ENCODE measurements at regions of chr11 and their contacts with region 1.

Region 1: GRCh38 chr11:48116437-48117228 is 100.0 kb upstream of the OR4B1 start:
- DNase-seq: peak; percentile 12
- ATAC-seq: peak; percentile 83
- H3K4me3 ChIP-seq: no peak overlapping the region
- H3K27ac ChIP-seq: no peak overlapping the region
- H3K4me1 ChIP-seq: no peaks in the 10 kb centered on the region
- H3K27me3 ChIP-seq: no peaks in the 10 kb centered on the region
- CTCF ChIP-seq: peak; percentile 36; the same call in 1 of the 2 replicates
- EP300 ChIP-seq: no peak
- POLR2A ChIP-seq: no peak
- RAD21 ChIP-seq: no peak

Region 2: DNA sequence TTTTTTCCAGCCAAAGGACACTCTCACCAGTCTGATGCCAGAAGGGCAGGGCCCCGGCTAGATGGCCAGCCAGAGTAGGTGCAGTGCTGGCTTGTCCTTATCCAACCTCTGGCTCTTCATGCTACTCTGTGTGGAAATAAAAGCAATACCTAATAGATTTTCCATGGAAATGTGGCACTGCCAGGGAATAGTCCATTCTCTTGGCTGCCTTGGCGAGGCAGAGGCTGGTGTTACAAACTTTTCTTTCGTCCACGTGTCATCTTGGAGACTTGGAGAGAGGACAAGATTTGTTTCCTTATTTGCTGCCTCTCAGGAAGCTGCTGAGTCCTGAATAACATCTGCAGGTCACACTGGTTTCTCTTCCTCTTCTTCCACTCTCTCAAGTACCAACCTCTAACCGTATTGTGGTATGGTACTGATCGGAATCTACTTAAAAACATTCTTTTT is 505.3 kb before region 1 on chr11:
- CTCF ChIA-PET with region 1: no interaction called
- POLR2A ChIA-PET with region 1: no interaction called
- in situ Hi-C with region 1: no loop called
- intact Hi-C with region 1: no loop called
- DNase-seq: no peak
- ATAC-seq: peak; percentile 19
- H3K4me3 ChIP-seq: no peak overlapping the region
- H3K27ac ChIP-seq: no peak overlapping the region
- H3K4me1 ChIP-seq: no peaks in the 10 kb centered on the region
- H3K27me3 ChIP-seq: no peaks in the 10 kb centered on the region
- CTCF ChIP-seq: no peak
- EP300 ChIP-seq: no peak
- POLR2A ChIP-seq: no peak
- RAD21 ChIP-seq: no peak

Region 3: GRCh38 chr11:47967577-47968425 is 148.8 kb before region 1 on chr11:
- CTCF ChIA-PET with region 1: no interaction called
- POLR2A ChIA-PET with region 1: no interaction called
- in situ Hi-C with region 1: loop called (anchors 10 kb)
- intact Hi-C with region 1: no loop called
- DNase-seq: no peak
- ATAC-seq: no peak
- H3K4me3 ChIP-seq: no peak overlapping the region
- H3K27ac ChIP-seq: no peak overlapping the region
- H3K4me1 ChIP-seq: no peaks in the 10 kb centered on the region
- H3K27me3 ChIP-seq: no peaks in the 10 kb centered on the region; a peak in 1 of 5 replicates
- CTCF ChIP-seq: no peak
- EP300 ChIP-seq: no peak
- POLR2A ChIP-seq: no peak
- RAD21 ChIP-seq: no peak

Region 4: GRCh38 chr11:49995565-49995964 is 1878.9 kb after region 1 on chr11:
- CTCF ChIA-PET with region 1: no interaction called
- POLR2A ChIA-PET with region 1: no interaction called
- in situ Hi-C with region 1: no loop called
- intact Hi-C with region 1: loop called (anchors 5 kb)
- DNase-seq: peak; percentile 73
- ATAC-seq: peak; percentile 89
- H3K4me3 ChIP-seq: no peak overlapping the region
- H3K27ac ChIP-seq: no peak overlapping the region
- H3K4me1 ChIP-seq: no peaks in the 10 kb centered on the region
- H3K27me3 ChIP-seq: no peaks in the 10 kb centered on the region
- CTCF ChIP-seq: peak; percentile 76
- EP300 ChIP-seq: no peak
- POLR2A ChIP-seq: no peak
- RAD21 ChIP-seq: peak; percentile 52

Measured in HepG2 (cell line).